CD4-positive, alpha-beta T cell (primary cell): ENCODE measurements at regions of chr2 and their contacts with region 1.

Region 1: DNA sequence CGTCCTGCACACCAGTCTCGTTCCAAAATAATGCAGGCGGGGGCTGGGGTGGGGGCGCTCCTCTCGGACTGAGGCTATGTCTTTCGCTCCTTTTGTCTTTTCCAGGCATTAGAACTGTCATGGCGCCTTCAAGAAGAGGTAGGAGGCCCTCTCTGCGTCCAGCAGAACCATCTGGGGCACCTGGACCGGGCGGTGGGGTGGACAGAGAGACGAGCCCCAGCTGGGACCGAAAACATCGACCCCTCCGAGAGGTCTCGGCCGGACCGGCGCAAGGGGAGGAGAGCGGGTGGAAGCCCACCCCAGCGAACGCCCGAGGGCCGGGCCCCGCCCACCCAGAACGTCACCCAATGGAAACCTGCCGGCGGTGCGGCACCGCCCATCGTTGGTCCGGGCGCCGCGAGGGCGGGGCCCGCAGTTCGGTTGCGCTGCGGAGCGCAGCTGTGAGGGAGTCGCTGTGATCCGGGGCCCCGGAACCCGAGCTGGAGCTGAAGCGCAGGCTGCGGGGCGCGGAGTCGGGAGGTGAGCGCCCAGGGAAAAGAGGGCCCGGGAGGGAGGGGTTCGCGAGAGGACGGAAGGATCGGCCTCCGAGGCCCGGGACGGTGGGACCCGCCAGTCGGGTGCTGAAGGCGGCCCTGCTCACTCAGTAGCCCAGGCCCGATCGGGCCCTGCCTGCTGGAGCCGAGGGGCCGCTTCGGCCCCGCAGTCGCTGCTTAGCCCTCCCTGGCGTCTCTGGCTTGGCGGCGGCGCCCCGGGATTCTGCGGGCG is at the start of gene NRBP1:
- DNase-seq: peak; percentile 77 to 95 (median 90)
- ATAC-seq: peak; percentile 93
- H3K4me3 ChIP-seq: peak within 1 kb of the TSS; percentile 95
- H3K4me3 Mint-ChIP-seq: peak within 1 kb of the TSS; percentile 100
- H3K27ac ChIP-seq: peak within 1 kb of the TSS; percentile 80 to 90
- H3K27ac Mint-ChIP-seq: peak within 1 kb of the TSS; percentile 96
- H3K4me1 ChIP-seq: peaks cover 40% of the 10 kb centered on the region
- H3K4me1 Mint-ChIP-seq: peaks cover 41% of the 10 kb centered on the region
- H3K27me3 ChIP-seq: no peaks in the 10 kb centered on the region
- H3K27me3 Mint-ChIP-seq: no peaks in the 10 kb centered on the region
- CTCF ChIP-seq: no peak
- total RNA-seq, gene NRBP1: 169 to 181 TPM

Region 2: DNA sequence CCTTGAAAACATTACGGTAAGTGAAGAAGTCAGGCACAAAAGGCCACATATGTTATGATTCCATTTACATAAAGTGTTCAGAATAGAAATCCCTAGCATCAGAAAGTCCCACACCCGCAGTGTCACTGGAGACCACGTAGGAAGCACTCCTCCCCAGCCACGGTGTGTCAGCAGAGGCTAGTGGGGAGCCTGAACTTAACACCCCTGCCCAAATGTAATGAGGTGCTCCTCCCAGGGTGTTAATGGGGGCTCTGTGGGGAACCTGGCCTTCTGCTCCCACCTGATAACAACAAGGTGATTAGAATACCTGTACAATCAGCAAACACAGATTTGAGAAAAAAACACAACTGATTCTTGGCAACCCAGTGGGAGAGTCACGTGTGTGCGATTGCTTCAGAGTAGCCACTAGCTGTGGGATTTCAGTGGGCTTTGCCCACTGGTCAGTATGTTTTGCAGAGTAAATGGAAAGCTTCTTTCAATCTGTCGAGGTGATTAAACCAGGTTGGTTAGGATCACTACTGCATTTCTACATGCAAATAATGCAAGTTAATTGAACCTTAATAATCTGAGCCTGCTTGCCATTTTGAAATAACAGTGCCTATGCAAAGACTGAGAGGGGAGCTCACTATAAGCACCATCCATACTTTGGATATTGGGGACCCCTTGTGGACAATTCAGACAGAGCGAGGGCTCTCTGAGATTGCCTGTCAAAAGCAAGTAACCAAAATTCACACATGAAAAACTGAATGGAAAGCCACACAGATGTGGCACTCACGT is 237.2 kb before region 1 on chr2:
- CTCF ChIA-PET with region 1: no interaction called
- POLR2A ChIA-PET with region 1: no interaction called
- intact Hi-C with region 1: no loop called
- DNase-seq: peak in 12 of 14 experiments; percentile 10 to 71 (median 28)
- ATAC-seq: peak; percentile 86
- H3K4me3 ChIP-seq: no peak overlapping the region
- H3K4me3 Mint-ChIP-seq: no peak overlapping the region
- H3K27ac ChIP-seq: no peak overlapping the region
- H3K27ac Mint-ChIP-seq: no peak overlapping the region
- H3K4me1 ChIP-seq: no peaks in the 10 kb centered on the region
- H3K4me1 Mint-ChIP-seq: no peaks in the 10 kb centered on the region
- H3K27me3 ChIP-seq: peaks cover 3 to 10% of the 10 kb centered on the region in 2 experiments
- H3K27me3 Mint-ChIP-seq: peaks cover 7% of the 10 kb centered on the region
- CTCF ChIP-seq: peak; percentile 49

Region 3: GRCh38 chr2:27217217-27218121 is 210.9 kb before region 1 on chr2 and contains the start of gene CAD:
- CTCF ChIA-PET with region 1: no interaction called
- POLR2A ChIA-PET with region 1: no interaction called
- intact Hi-C with region 1: no loop called
- DNase-seq: peak; percentile 75 to 94 (median 84)
- ATAC-seq: peak; percentile 74
- H3K4me3 ChIP-seq: peak within 1 kb of the TSS; percentile 87
- H3K4me3 Mint-ChIP-seq: peak within 1 kb of the TSS; percentile 98
- H3K27ac ChIP-seq: peak within 1 kb of the TSS; percentile 67 to 75
- H3K27ac Mint-ChIP-seq: peak within 1 kb of the TSS; percentile 93
- H3K4me1 ChIP-seq: peaks cover 31% of the 10 kb centered on the region
- H3K4me1 Mint-ChIP-seq: peaks cover 45% of the 10 kb centered on the region
- H3K27me3 ChIP-seq: no peaks in the 10 kb centered on the region
- H3K27me3 Mint-ChIP-seq: no peaks in the 10 kb centered on the region
- CTCF ChIP-seq: no peak
- total RNA-seq, gene CAD: 20.0 to 20.3 TPM

Region 4: DNA sequence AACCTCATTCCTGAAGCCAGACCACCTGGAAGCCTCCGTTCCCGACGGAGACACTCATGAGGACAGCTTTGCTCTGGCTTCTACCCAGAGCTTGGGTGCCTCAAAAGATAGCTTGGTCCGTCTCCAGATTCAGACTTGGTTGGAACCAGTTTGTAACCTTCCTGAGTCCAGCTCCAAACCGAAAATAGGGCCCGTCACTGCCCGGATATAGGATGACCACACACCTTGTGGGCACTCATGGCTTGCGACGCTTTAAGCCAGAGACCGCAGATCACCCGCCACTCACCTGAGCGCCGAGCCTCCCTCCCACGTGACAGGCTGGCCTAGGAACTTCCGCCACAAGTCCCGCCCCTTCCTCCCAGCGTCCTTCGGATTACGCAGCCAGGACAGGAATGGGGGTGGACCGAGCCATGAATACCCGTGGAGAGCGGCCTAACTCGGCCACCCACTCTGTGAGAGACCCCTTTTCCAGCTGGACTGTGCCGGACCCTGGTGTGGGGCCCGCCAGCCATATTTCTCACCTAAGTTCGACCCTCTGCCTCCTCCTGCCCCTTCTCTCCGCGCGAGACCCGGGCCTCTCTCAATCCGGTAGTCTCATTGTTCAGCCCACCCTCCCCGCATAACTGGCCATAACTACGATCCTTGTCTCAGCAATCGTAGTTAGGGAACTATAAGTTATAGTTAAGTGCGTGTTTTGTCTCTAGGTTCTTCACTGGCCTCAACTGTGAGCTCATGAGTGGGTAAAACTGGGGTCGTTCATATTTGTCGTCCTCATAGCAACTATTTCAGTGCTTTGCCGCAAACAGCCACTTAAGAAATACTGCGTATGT is 105.4 kb before region 1 on chr2 and contains the start of gene MPV17:
- CTCF ChIA-PET with region 1: no interaction called
- POLR2A ChIA-PET with region 1: interaction called, 11 read pairs
- intact Hi-C with region 1: loop called in 1 of 2 experiments (anchors 5 kb)
- DNase-seq: peak; percentile 77 to 93 (median 82)
- ATAC-seq: peak; percentile 97
- H3K4me3 ChIP-seq: peak within 1 kb of the TSS; percentile 86
- H3K4me3 Mint-ChIP-seq: peak within 1 kb of the TSS; percentile 100
- H3K27ac ChIP-seq: peak within 1 kb of the TSS; percentile 90 to 93
- H3K27ac Mint-ChIP-seq: peak within 1 kb of the TSS; percentile 98
- H3K4me1 ChIP-seq: peaks cover 25% of the 10 kb centered on the region
- H3K4me1 Mint-ChIP-seq: peaks cover 31% of the 10 kb centered on the region
- H3K27me3 ChIP-seq: no peaks in the 10 kb centered on the region
- H3K27me3 Mint-ChIP-seq: no peaks in the 10 kb centered on the region
- CTCF ChIP-seq: no peak
- total RNA-seq, gene MPV17: 29.3 to 31.0 TPM

Region 5: GRCh38 chr2:27380626-27381545 is 47.5 kb before region 1 on chr2 and contains the start of gene ZNF513:
- CTCF ChIA-PET with region 1: interaction called, 5 read pairs
- POLR2A ChIA-PET with region 1: interaction called, 18 read pairs
- intact Hi-C with region 1: loop called in 1 of 2 experiments (anchors 2 kb)
- DNase-seq: peak; percentile 75 to 94 (median 86)
- ATAC-seq: peak; percentile 92
- H3K4me3 ChIP-seq: peak within 1 kb of the TSS; percentile 66
- H3K4me3 Mint-ChIP-seq: peak within 1 kb of the TSS; percentile 93
- H3K27ac ChIP-seq: peak within 1 kb of the TSS; percentile 80 to 86
- H3K27ac Mint-ChIP-seq: peak within 1 kb of the TSS; percentile 91
- H3K4me1 ChIP-seq: peaks cover 18% of the 10 kb centered on the region
- H3K4me1 Mint-ChIP-seq: peaks cover 32% of the 10 kb centered on the region
- H3K27me3 ChIP-seq: no peaks in the 10 kb centered on the region
- H3K27me3 Mint-ChIP-seq: no peaks in the 10 kb centered on the region
- CTCF ChIP-seq: no peak
- total RNA-seq, gene ZNF513: 22.8 to 22.9 TPM

Region 6: DNA sequence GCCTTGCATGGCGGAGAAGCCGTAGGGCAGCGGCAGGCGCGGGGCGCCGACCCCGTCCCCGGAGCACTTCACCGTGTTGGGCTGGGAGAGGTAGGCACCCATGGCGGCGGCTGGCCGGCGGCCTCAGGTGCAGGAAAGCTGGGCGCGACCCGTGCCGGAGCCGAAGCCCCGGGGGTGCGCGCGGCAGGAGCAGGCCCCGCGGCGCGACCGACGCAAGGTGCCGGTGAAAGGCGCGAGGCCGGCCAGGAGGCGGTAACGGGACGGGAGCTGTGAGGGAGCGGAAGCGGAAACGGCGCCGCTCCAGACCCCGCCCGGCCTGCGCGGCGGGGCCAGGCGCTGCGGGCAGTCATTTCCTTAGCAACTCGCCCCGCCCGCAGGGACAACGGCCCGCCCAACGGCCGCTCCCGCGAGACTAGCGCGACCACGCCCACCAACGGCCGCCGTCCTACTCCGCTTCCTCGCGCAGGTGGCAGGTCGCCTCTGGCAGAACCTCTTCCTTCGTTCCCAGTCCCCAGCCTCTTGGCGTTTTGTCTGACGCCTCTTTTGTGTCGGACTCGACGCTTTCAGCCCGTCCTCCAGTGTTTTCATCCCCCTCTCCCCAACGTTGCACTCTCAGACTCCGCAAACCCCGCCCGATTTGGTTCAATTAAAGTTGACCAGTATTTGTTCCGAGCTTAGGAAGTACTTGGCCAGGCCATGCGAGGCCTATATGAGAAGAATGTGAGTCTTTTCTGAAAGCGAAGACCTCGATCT is 18.9 kb before region 1 on chr2 and contains the start of gene PPM1G:
- CTCF ChIA-PET with region 1: interaction called, 12 read pairs
- POLR2A ChIA-PET with region 1: interaction called, 59 read pairs
- intact Hi-C with region 1: loop called in 1 of 2 experiments (anchors 1 kb)
- DNase-seq: peak; percentile 92 to 98 (median 96)
- ATAC-seq: peak; percentile 95
- H3K4me3 ChIP-seq: peak within 1 kb of the TSS; percentile 82
- H3K4me3 Mint-ChIP-seq: peak within 1 kb of the TSS; percentile 90
- H3K27ac ChIP-seq: peak within 1 kb of the TSS; percentile 85 to 90
- H3K27ac Mint-ChIP-seq: peak within 1 kb of the TSS; percentile 82
- H3K4me1 ChIP-seq: peaks cover 33% of the 10 kb centered on the region
- H3K4me1 Mint-ChIP-seq: peaks cover 41% of the 10 kb centered on the region
- H3K27me3 ChIP-seq: no peaks in the 10 kb centered on the region
- H3K27me3 Mint-ChIP-seq: no peaks in the 10 kb centered on the region
- CTCF ChIP-seq: no peak
- total RNA-seq, gene PPM1G: 30.4 to 31.2 TPM

Region 7: DNA sequence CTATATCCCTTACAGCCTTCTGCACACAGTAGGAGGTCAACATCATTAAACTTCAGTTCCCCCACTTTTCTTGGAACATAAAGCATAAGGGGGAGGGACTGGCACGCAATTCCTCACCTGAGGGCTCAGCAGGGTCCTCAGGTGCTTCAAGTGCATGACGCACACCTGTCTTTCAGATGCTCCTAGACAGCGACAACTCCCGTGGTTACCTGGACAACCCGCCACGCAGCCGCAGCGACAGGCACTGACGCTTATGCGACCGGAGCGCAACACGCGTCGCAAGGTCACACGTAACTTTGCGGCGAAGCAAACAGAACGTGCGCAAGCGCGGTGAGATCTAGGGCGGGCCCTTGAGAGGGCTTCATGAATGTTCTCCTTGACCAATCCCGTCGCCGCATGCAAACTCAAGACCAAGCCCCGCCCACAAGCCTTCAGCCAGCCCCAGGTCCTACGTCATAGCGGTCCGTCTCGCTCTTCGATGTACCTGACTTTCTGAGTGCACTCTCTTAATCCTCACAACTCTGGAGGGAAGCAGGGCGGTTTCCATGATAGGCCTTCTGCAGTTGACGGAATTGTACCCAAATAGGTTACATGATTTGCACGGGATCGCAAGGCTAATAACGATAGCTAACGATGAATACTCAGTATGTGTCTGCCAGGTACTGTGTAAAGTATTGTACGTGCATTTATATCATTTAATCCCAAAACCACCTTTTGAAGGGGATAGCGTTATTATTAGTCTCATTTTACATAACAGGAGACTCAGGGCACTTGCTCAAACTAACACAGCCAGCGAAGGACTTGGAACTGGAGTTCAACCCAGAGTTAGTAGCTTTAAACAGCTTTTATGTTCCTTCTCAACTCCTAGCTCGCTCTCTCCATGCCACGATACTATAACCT is 61.4 kb after region 1 on chr2 and contains the start of gene IFT172:
- CTCF ChIA-PET with region 1: no interaction called
- POLR2A ChIA-PET with region 1: interaction called, 3 read pairs
- intact Hi-C with region 1: loop called (anchors 1 to 5 kb)
- DNase-seq: peak; percentile 97 to 100 (median 99)
- ATAC-seq: peak; percentile 85
- H3K4me3 ChIP-seq: peak within 1 kb of the TSS; percentile 61
- H3K4me3 Mint-ChIP-seq: peak within 1 kb of the TSS; percentile 80
- H3K27ac ChIP-seq: peak within 1 kb of the TSS; percentile 55 to 91
- H3K27ac Mint-ChIP-seq: peak within 1 kb of the TSS; percentile 93
- H3K4me1 ChIP-seq: peaks cover 20% of the 10 kb centered on the region
- H3K4me1 Mint-ChIP-seq: peaks cover 18% of the 10 kb centered on the region
- H3K27me3 ChIP-seq: peaks cover 11 to 13% of the 10 kb centered on the region in 2 experiments
- H3K27me3 Mint-ChIP-seq: peaks cover 12% of the 10 kb centered on the region
- CTCF ChIP-seq: no peak
- total RNA-seq, gene IFT172: 13.3 to 14.4 TPM

Region 8: DNA sequence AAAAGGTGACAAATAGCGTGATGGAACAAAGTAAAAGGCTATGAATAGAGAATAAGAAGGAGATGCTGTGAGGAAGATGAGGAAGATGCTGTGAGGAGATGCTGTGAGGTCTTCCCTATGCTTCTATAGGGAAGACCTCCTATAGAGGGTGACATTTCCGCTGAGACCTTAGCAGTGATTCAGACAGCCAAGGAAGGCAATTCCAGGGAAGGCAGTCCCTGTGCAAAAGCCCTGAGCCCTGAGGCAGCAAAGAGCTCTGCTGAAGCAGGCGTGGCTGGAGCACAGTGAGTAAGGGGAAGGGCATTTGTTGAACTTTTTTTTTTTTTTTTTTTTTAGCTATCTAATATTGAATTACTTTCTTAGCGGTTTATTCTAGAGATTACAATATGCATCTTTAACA is 821.6 kb after region 1 on chr2:
- CTCF ChIA-PET with region 1: no interaction called
- POLR2A ChIA-PET with region 1: no interaction called
- intact Hi-C with region 1: no loop called
- DNase-seq: no peak
- ATAC-seq: no peak
- H3K4me3 ChIP-seq: no peak overlapping the region
- H3K4me3 Mint-ChIP-seq: no peak overlapping the region
- H3K27ac ChIP-seq: no peak overlapping the region
- H3K27ac Mint-ChIP-seq: peak overlapping the region; percentile 5
- H3K4me1 ChIP-seq: peaks cover 14% of the 10 kb centered on the region
- H3K4me1 Mint-ChIP-seq: peaks cover 27% of the 10 kb centered on the region
- H3K27me3 ChIP-seq: no peaks in the 10 kb centered on the region
- H3K27me3 Mint-ChIP-seq: no peaks in the 10 kb centered on the region
- CTCF ChIP-seq: no peak